IMR-90 (cell line): ENCODE measurements at regions of chr10 and their contacts with region 1.

Region 1: GRCh38 chr10:104016661-104017060 is 49.7 kb downstream of the SLK start:
- DNase-seq: no peak
- ATAC-seq: no peak
- H3K4me3 ChIP-seq: no peak overlapping the region
- H3K27ac ChIP-seq: no peak overlapping the region
- H3K4me1 ChIP-seq: peaks cover 2% of the 10 kb centered on the region
- H3K27me3 ChIP-seq: no peaks in the 10 kb centered on the region
- CTCF ChIP-seq: no peak
- POLR2A ChIP-seq: no peak
- RAD21 ChIP-seq: no peak

Region 2: GRCh38 chr10:103102195-103102594 is 914.5 kb before region 1 on chr10:
- CTCF ChIA-PET with region 1: no interaction called
- POLR2A ChIA-PET with region 1: no interaction called
- dilution Hi-C with region 1: no loop called
- in situ Hi-C with region 1: no loop called
- intact Hi-C with region 1: no loop called
- DNase-seq: no peak
- ATAC-seq: no peak
- H3K4me3 ChIP-seq: no peak overlapping the region
- H3K27ac ChIP-seq: no peak overlapping the region
- H3K4me1 ChIP-seq: no peaks in the 10 kb centered on the region
- H3K27me3 ChIP-seq: no peaks in the 10 kb centered on the region
- CTCF ChIP-seq: no peak
- POLR2A ChIP-seq: no peak
- RAD21 ChIP-seq: no peak

Region 3: DNA sequence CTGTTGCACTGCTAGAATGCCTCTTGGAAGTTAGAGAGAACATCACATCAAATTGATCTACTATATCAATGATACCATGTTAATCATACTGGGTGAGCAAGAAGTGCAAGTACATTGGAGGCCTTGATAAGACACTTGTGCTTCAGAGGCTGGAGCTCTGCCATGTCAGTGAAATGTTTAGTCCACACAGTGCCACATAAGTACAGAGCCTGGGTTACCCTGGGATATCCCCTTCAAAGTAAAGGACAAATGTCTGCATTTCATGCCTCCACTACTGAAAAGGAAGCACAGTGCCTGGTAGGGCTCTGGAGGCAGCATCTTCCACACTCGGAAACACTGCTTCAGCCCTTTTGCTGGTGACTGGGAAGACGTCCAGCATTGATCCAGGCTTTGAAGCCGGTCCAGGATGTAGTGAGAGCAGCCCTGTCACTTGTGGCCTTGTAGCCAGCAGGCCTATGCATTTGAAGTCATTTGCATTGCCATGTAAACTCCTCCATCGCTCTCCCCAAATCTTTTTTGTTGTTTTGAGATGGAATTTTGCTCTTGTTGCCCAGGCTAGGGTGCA is 83.0 kb before region 1 on chr10:
- CTCF ChIA-PET with region 1: no interaction called
- POLR2A ChIA-PET with region 1: interaction called, 12 read pairs
- dilution Hi-C with region 1: no loop called
- in situ Hi-C with region 1: no loop called
- intact Hi-C with region 1: no loop called
- DNase-seq: no peak
- ATAC-seq: peak; percentile 29; the same call in 1 of the 2 replicates
- H3K4me3 ChIP-seq: no peak overlapping the region
- H3K27ac ChIP-seq: no peak overlapping the region
- H3K4me1 ChIP-seq: no peaks in the 10 kb centered on the region
- H3K27me3 ChIP-seq: peaks cover 13% of the 10 kb centered on the region
- CTCF ChIP-seq: no peak
- POLR2A ChIP-seq: no peak
- RAD21 ChIP-seq: no peak

Region 4: DNA sequence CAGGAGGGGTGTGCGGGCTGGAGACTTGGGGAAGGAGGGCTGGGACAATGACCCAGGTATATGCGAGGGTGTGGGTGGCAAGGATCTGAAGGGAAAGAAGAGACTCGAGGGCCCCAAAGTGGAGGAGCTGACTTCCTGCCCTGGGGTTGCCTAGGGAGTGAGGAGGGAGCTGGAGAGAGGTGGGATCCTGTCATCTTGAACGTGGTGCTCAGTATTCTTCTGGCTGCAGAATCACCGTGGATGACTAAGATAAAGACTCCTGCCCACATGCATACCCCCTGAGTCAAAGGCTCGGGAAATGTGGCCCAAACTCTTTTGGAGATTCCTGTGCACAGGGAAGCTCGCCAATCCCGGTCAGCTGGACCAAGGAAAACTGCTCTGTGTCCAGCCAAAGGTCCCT is 37.8 kb after region 1 on chr10:
- CTCF ChIA-PET with region 1: no interaction called
- POLR2A ChIA-PET with region 1: no interaction called
- dilution Hi-C with region 1: no loop called
- in situ Hi-C with region 1: no loop called
- intact Hi-C with region 1: no loop called
- DNase-seq: peak; percentile 77
- ATAC-seq: peak; percentile 83
- H3K4me3 ChIP-seq: no peak overlapping the region
- H3K27ac ChIP-seq: no peak overlapping the region; the same call in 1 of the 2 replicates
- H3K4me1 ChIP-seq: peaks cover 4% of the 10 kb centered on the region
- H3K27me3 ChIP-seq: peaks cover 2% of the 10 kb centered on the region; the same call in 1 of the 2 replicates
- CTCF ChIP-seq: no peak
- POLR2A ChIP-seq: no peak
- RAD21 ChIP-seq: no peak